Endothelial cell of umbilical vein (primary cell): ENCODE measurements at regions of chr9 and their contacts with region 1.

Region 1: DNA sequence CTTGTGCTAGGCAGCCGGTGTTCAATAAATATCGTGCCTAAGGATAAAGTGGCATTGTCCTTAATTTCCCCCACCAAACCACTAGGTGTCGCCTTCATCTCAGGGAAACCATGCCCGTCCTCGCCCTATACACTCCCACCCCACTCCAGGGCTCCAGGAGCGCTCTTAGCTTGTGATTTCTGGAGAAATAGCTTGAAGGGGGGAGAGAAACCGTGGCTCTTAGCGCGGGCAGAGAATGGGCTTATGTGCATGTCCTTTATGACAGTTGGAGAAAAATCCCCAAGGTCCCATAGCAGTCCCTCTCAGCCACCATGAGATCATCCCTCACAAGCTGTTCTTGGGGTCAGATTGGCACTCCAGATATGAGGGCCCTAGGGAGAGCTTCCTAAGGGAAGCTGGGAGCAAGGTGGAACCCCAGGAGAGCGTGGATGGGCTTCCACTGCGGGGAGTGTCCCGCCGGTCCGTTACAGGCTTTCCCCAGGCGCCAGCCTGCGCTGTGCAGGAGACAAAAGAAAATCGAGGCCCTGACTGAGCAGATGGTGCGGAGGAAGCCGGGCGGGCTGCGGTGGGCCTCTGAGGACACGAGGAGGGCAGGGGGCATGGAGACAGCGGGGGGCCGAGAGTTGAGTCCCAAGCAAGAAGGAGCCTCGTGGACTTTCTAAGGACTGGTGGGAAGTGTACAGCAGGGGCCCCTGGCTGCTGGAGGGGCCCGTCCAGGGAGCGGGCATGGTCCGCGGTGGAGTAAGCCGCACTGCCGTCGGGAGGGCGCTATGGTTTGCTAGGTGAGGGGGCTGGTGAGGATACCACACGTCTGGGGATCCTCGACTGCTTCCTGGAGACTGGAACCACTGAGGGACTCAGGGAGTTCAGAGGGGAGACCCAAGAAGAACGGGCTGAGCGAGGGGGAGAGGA is 750 bp upstream of the NPR2 start:
- DNase-seq: peak; percentile 78
- H3K4me3 ChIP-seq: peak overlapping the region in 1 of 3 experiments; percentile 11
- H3K27ac ChIP-seq: no peak overlapping the region
- H3K4me1 ChIP-seq: peaks cover 28% of the 10 kb centered on the region
- H3K27me3 ChIP-seq: no peaks in the 10 kb centered on the region
- CTCF ChIP-seq: peak; percentile 76 to 84
- POLR2A ChIP-seq: no peak

Region 2: DNA sequence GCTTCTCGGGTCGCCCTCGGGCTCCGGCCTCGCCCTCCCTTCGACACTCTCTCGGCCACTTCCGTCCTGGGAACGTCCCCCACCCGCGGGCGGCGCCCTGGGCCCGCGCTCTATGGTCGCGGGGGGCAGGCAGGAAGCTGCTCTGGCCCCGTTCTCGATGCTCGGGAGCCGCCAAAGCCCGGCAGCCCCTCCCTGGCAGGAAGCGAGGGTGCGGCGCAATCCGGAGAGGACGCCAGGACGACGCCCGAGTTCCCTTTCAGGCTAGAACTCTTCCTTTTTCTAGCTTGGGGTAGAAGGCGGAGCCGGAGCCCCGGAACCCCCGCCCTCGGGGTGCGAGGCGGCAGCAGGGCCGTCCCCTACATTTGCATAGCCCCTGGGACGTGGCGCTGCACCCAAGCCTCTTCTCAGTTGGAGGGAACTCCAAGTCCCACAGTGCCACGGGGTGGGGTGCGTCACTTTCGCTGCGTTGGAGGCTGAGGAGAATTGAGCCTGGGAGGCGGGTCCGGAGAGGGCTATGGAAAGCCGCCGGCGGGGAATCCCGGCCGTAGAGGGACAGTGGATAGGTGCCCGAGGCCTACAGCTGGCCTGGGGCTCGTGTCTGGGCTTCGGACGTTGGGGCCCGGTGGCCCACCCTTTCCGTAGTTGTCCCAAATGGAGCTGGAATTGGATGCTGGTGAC is 58.4 kb before region 1 on chr9 and contains the starts of genes CREB3 and TLN1:
- CTCF ChIA-PET with region 1: interaction called, 102 read pairs
- POLR2A ChIA-PET with region 1: interaction called, 3 read pairs
- dilution Hi-C with region 1: no loop called
- intact Hi-C with region 1: loop called (anchors 1 kb)
- DNase-seq: peak; percentile 99
- H3K4me3 ChIP-seq: peak within 1 kb of the TSS; percentile 46 to 92 (median 79)
- H3K27ac ChIP-seq: peak within 1 kb of the TSS; percentile 79
- H3K4me1 ChIP-seq: peaks cover 55% of the 10 kb centered on the region
- H3K27me3 ChIP-seq: no peaks in the 10 kb centered on the region
- CTCF ChIP-seq: peak in 1 of 2 donors; percentile 14
- POLR2A ChIP-seq: peak; percentile 48
- total RNA-seq, gene CREB3: 36.4 and 39.8 TPM in 2 replicates
- total RNA-seq, gene TLN1: 424 and 450 TPM in 2 replicates

Region 3: DNA sequence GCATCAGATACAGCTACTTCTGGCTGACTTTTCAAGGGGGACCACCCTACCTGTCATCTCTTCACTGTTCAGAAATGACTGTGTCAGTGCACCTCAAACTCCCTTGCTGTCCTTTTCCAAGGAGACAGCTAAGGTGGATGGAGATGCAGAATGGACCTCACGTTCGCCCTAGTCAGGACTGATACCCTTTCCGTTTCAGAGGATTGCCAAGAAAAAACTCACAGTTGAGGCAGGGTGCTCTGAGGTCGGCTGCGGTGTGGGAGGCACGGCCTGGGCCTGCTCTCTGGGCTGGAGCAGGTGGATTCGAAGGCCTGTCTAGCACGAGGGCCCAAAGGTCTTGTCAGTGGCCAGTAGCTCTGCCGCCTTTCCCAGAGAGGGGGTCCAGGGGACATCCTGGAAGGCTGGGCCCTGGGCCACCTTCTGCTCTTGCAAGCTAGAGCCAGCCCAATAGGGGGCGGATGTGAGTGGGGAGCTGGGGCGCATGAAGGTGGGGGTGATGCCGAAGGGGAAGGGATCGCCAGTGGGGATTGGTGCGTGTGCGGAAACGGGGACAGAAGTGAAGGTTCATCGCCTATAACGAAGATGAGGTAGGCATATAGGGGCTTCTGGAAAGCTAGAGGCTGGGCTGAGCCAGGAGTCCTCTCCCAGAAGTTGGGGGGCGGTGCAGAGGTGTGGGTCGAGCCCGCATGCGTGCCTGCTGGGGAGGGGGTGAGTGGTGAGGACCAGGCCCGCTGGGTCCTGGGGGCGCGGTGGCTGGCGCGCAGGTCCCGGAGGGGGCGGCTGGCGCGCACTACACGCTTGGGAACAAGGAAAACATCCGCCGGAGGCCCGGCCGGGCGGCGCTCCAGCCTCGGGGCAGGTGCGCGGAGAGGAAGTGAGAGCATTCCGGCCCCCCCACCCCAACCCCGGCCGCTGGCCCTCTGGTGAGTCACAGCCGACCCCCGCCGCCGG is 34.1 kb before region 1 on chr9:
- CTCF ChIA-PET with region 1: interaction called, 62 read pairs
- POLR2A ChIA-PET with region 1: interaction called, 3 read pairs
- dilution Hi-C with region 1: no loop called
- intact Hi-C with region 1: loop called (anchors 2 kb)
- DNase-seq: peak; percentile 84
- H3K4me3 ChIP-seq: peak overlapping the region in 2 of 3 experiments; percentile 8 to 15
- H3K27ac ChIP-seq: peak overlapping the region; percentile 97
- H3K4me1 ChIP-seq: peaks cover 92% of the 10 kb centered on the region
- H3K27me3 ChIP-seq: no peaks in the 10 kb centered on the region
- CTCF ChIP-seq: peak; percentile 45 to 68
- POLR2A ChIP-seq: no peak

Region 4: DNA sequence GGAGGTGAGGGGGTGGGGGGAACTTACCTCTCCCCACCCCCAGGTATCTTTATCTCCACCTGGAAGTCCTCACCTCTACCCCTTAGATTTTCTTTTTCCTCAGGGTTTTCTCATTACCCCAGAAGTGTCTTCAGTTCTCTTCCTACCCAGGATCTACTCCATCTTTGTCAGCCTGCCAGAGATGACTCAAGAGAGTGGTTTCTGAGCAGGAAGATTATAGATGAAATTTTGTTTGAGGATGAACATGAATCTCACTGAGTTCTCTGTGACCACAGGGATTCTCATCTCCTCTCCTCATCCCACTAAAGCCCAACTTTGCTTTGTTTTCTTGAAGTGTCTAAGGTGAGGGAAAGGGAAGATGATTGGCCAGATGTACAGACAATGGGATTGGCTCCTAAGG is 29.4 kb after region 1 on chr9:
- CTCF ChIA-PET with region 1: interaction called, 277 read pairs
- POLR2A ChIA-PET with region 1: no interaction called
- dilution Hi-C with region 1: no loop called
- intact Hi-C with region 1: loop called (anchors 1 kb)
- DNase-seq: no peak
- H3K4me3 ChIP-seq: no peak overlapping the region
- H3K27ac ChIP-seq: no peak overlapping the region
- H3K4me1 ChIP-seq: no peaks in the 10 kb centered on the region
- H3K27me3 ChIP-seq: peaks cover 0 to 2% of the 10 kb centered on the region in 2 experiments
- CTCF ChIP-seq: no peak
- POLR2A ChIP-seq: no peak

Region 5: GRCh38 chr9:35859310-35859989 is 68.8 kb after region 1 on chr9:
- CTCF ChIA-PET with region 1: interaction called, 16 read pairs
- POLR2A ChIA-PET with region 1: no interaction called
- dilution Hi-C with region 1: no loop called
- intact Hi-C with region 1: no loop called
- DNase-seq: no peak
- H3K4me3 ChIP-seq: no peak overlapping the region
- H3K27ac ChIP-seq: no peak overlapping the region
- H3K4me1 ChIP-seq: no peaks in the 10 kb centered on the region
- H3K27me3 ChIP-seq: peaks cover 22 to 51% of the 10 kb centered on the region in 2 experiments
- CTCF ChIP-seq: no peak
- POLR2A ChIP-seq: no peak

Region 6: GRCh38 chr9:35910613-35911359 is 120.1 kb after region 1 on chr9:
- CTCF ChIA-PET with region 1: interaction called, 33 read pairs
- POLR2A ChIA-PET with region 1: no interaction called
- dilution Hi-C with region 1: no loop called
- intact Hi-C with region 1: loop called (anchors 1 kb)
- DNase-seq: peak; percentile 86
- H3K4me3 ChIP-seq: peak overlapping the region in 2 of 3 experiments; percentile 4 to 53
- H3K27ac ChIP-seq: peak overlapping the region; percentile 94
- H3K4me1 ChIP-seq: peaks cover 68% of the 10 kb centered on the region
- H3K27me3 ChIP-seq: no peaks in the 10 kb centered on the region
- CTCF ChIP-seq: peak; percentile 60 to 65
- POLR2A ChIP-seq: peak; percentile 61